ENCODE measurements at regions of chr5 and their contacts with region 1.

Region 1: GRCh38 chr5:40374853-40375252 is 304.9 kb upstream of the PTGER4 start:
- DNase-seq: no peak
- H3K4me3 ChIP-seq: no peak overlapping the region
- H3K27ac ChIP-seq: no peak overlapping the region
- H3K27me3 ChIP-seq: no peaks in the 10 kb centered on the region
- CTCF ChIP-seq: no peak

Region 2: DNA sequence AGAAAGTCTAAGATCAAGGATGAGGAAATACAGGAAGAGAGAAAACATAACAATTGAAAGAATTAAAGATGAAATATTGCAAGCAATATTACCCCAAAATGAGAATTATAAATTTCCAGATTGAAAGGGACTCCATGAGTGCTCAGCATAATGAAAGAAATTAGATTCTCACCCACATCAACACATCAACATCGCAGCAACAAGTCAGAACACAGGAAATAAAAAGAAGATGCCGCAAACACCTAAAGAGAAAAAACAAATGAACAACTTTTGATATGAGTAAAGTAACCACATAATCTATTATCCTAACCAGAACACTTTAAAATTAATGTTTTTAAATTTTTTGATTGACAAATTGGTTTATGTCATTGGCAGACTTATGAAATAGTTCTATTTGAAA is 13.5 kb before region 1 on chr5:
- CTCF ChIA-PET with region 1: no interaction called
- POLR2A ChIA-PET with region 1: no interaction called
- DNase-seq: no peak
- H3K4me3 ChIP-seq: no peak overlapping the region
- H3K27ac ChIP-seq: no peak overlapping the region
- H3K27me3 ChIP-seq: no peaks in the 10 kb centered on the region
- CTCF ChIP-seq: no peak

Region 3: GRCh38 chr5:40717281-40717680 is 342.4 kb after region 1 on chr5:
- CTCF ChIA-PET with region 1: no interaction called
- POLR2A ChIA-PET with region 1: interaction called, 23 read pairs
- DNase-seq: peak; percentile 8
- H3K4me3 ChIP-seq: no peak overlapping the region
- H3K27ac ChIP-seq: no peak overlapping the region
- H3K27me3 ChIP-seq: no peaks in the 10 kb centered on the region
- CTCF ChIP-seq: no peak